ENCODE measurements at regions of chr14 and their contacts with region 1.

Region 1: GRCh38 chr14:69288011-69288771 is 28.2 kb downstream of the GALNT16 start:
- DNase-seq: peak; percentile 40 to 69
- H3K4me3 ChIP-seq: no peak overlapping the region
- H3K27ac ChIP-seq: peak overlapping the region; percentile 14 to 57
- H3K4me1 ChIP-seq: peaks cover 0 to 20% (median 11%) of the 10 kb centered on the region in 4 donors
- H3K27me3 ChIP-seq: no peaks in the 10 kb centered on the region
- CTCF ChIP-seq: peak; percentile 35 to 46

Region 2: GRCh38 chr14:69181491-69181890 is 106.7 kb before region 1 on chr14:
- intact Hi-C with region 1: no loop called
- DNase-seq: no peak
- H3K4me3 ChIP-seq: no peak overlapping the region
- H3K27ac ChIP-seq: no peak overlapping the region
- H3K4me1 ChIP-seq: no peaks in the 10 kb centered on the region
- H3K27me3 ChIP-seq: no peaks in the 10 kb centered on the region
- CTCF ChIP-seq: no peak

Region 3: GRCh38 chr14:69252851-69253250 is 35.3 kb before region 1 on chr14:
- intact Hi-C with region 1: loop called (anchors 5 kb)
- DNase-seq: no peak
- H3K4me3 ChIP-seq: no peak overlapping the region
- H3K27ac ChIP-seq: no peak overlapping the region
- H3K4me1 ChIP-seq: peaks cover 0 to 6% (median 0%) of the 10 kb centered on the region in 4 donors
- H3K27me3 ChIP-seq: no peaks in the 10 kb centered on the region
- CTCF ChIP-seq: no peak

Region 4: DNA sequence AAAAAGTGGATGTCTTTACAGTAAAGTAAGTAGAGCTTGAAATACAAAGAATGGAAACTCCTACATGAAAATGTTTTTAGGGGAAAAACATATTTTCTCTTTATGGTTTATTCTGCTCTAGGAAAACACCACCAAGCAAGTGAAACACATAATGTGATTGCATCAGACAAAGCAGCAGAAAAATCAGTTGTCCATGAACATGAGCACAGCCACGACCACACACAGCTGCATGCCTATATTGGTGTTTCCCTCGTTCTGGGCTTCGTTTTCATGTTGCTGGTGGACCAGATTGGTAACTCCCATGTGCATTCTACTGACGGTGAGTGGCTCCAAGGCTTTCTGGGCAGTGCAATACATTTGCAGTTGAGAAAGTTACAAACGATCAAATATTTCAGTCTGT is 153.8 kb after region 1 on chr14:
- intact Hi-C with region 1: no loop called
- DNase-seq: no peak
- H3K4me3 ChIP-seq: no peak overlapping the region
- H3K27ac ChIP-seq: no peak overlapping the region
- H3K4me1 ChIP-seq: no peaks in the 10 kb centered on the region
- H3K27me3 ChIP-seq: no peaks in the 10 kb centered on the region
- CTCF ChIP-seq: no peak

Region 5: GRCh38 chr14:70955543-70956480 is 1667.6 kb after region 1 on chr14:
- intact Hi-C with region 1: no loop called
- DNase-seq: no peak
- H3K4me3 ChIP-seq: no peak overlapping the region
- H3K27ac ChIP-seq: no peak overlapping the region
- H3K4me1 ChIP-seq: peaks cover 0 to 16% (median 8%) of the 10 kb centered on the region in 4 donors
- H3K27me3 ChIP-seq: no peaks in the 10 kb centered on the region
- CTCF ChIP-seq: peak; percentile 32 to 41

Measured in tibial artery (tissue), 4 donors.